Activated B cell treated with CpG ODN at 0.5 μM for 24 hours (primary cell): ENCODE measurements at regions of chr1 and their contacts with region 1.

Region 1: GRCh38 chr1:204465546-204466415 is 28.8 kb downstream of the PIK3C2B start:
- DNase-seq: peak; percentile 49
- ATAC-seq: peak; percentile 53
- H3K4me3 Mint-ChIP-seq: peak overlapping the region; percentile 52
- H3K27ac Mint-ChIP-seq: peak overlapping the region; percentile 94
- H3K4me1 Mint-ChIP-seq: peaks cover 85% of the 10 kb centered on the region
- H3K27me3 Mint-ChIP-seq: no peaks in the 10 kb centered on the region
- CTCF ChIP-seq: no peak

Region 2: DNA sequence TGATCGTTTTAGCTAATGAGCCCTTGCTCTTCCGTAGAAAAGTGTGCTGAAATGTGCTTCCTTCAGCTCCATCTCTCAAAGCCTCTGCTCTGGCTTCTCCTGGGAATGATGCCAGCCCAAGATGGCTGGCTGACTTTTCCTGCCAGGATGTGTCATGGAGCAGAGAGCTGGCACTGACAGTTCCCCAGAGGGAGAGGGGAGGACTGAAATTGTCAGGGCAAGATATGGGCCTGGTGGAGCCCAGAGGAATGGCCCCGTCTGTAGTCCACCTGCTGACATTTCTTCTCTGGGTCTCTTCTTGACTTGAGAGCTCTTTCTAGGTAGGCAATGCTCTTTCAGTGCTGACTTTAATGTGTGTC is 80.8 kb before region 1 on chr1:
- CTCF ChIA-PET with region 1: no interaction called
- POLR2A ChIA-PET with region 1: no interaction called
- intact Hi-C with region 1: no loop called
- DNase-seq: no peak
- ATAC-seq: no peak
- H3K4me3 Mint-ChIP-seq: no peak overlapping the region
- H3K27ac Mint-ChIP-seq: no peak overlapping the region
- H3K4me1 Mint-ChIP-seq: no peaks in the 10 kb centered on the region
- H3K27me3 Mint-ChIP-seq: peaks cover under 1% of the 10 kb centered on the region
- CTCF ChIP-seq: no peak

Region 3: DNA sequence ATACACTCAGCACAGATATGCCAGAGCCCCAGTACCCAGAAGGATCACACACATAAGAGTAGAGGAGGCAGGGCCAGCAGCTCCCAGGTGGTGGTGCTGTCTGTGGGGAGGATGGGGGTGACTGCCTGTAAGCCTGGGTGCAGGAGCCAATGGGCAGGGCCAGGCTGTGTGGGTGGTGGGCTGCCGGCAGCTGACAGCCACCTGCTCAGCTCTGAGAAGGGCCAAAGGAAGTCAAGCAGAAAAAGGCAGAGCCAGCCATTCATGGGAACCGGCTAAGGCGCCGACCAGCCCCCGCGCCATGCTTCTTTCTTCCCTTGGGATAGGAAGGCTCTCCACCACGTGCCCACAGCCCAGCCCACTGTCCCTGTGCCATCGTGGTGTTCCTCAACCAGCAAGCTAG is 14.7 kb after region 1 on chr1:
- CTCF ChIA-PET with region 1: interaction called, 8 read pairs
- POLR2A ChIA-PET with region 1: interaction called, 127 read pairs
- intact Hi-C with region 1: loop called (anchors 1 kb)
- DNase-seq: peak; percentile 40
- ATAC-seq: peak; percentile 57
- H3K4me3 Mint-ChIP-seq: peak overlapping the region; percentile 76
- H3K27ac Mint-ChIP-seq: peak overlapping the region; percentile 98
- H3K4me1 Mint-ChIP-seq: peaks cover 98% of the 10 kb centered on the region
- H3K27me3 Mint-ChIP-seq: no peaks in the 10 kb centered on the region
- CTCF ChIP-seq: no peak